ENCODE measurements at regions of chr15 and their contacts with region 1.

Region 1: DNA sequence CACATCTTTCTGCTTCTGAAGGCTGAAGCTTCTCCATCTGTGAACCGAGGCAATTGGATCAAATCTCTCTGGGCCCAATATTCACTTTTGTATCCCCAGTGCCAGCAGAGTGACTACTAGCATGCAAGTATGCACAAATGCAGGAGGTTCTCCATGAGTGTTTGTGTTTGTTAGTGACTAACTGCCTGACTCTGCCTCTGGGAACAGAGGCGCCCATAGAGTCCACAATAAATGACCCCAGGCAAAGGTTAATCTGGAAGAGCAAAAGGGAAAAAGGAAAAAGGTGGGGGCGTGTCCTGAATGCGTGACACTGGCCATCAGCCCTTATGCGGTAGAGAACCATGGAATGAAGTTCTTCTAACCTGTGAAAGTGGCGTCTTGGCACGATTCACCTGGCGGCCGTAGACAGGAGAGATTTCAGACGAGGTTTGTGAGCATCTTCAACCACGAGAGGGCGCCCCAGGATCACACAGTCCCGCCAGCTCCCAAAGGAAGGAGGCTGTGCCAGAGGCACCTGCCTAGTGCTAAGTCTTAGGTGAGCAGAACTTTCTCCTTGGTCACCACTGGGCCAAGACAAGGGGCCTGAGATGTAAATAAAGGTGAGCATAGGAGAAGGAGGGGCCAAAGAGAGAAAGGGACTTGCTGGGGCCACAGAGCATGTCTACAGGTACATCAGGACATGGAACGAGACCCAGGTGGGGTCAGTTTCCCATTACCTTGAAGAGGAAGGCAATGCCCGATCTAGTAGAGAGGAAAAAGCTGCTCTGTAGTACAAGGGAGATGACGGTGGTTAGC is 44.2 kb downstream of the RBPMS2 start:
- DNase-seq: peak; percentile 91
- H3K4me3 Mint-ChIP-seq: no peak overlapping the region
- H3K27ac Mint-ChIP-seq: no peak overlapping the region
- H3K4me1 Mint-ChIP-seq: no peaks in the 10 kb centered on the region
- H3K27me3 Mint-ChIP-seq: peaks cover 1% of the 10 kb centered on the region

Region 2: DNA sequence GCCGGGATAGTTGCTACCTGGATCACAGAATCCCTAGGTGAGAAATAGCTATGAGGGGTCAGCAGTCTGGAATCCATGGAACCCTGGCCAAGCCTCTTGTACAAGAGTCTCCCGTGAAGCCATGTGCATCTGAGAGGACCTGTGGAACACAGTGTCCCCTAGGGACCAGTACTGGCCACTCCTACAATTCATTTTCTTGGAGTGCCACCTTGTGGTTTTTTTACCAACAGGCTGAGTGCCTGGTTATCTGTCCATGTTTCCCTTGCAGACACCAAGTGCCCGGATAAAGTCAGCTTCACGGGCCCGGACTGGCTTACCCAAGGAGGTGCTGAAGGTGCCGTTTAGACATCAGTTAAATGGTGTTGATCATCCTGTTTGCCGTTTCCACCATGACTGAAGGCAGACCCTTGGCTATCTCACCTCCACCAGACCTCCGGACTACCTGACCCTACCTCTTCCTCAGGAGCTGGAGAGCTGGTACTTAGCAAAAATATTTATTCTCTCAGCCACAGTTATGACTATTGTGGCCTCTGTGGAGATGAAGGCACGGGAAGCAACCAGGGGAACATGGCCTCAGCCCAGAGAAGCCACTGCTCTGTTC is 49.7 kb before region 1 on chr15:
- CTCF ChIA-PET with region 1: interaction called, 285 read pairs
- POLR2A ChIA-PET with region 1: no interaction called
- intact Hi-C with region 1: loop called (anchors 1 kb)
- DNase-seq: peak; percentile 20
- H3K4me3 Mint-ChIP-seq: no peak overlapping the region
- H3K27ac Mint-ChIP-seq: no peak overlapping the region
- H3K4me1 Mint-ChIP-seq: peaks cover 2% of the 10 kb centered on the region
- H3K27me3 Mint-ChIP-seq: no peaks in the 10 kb centered on the region

Region 3: DNA sequence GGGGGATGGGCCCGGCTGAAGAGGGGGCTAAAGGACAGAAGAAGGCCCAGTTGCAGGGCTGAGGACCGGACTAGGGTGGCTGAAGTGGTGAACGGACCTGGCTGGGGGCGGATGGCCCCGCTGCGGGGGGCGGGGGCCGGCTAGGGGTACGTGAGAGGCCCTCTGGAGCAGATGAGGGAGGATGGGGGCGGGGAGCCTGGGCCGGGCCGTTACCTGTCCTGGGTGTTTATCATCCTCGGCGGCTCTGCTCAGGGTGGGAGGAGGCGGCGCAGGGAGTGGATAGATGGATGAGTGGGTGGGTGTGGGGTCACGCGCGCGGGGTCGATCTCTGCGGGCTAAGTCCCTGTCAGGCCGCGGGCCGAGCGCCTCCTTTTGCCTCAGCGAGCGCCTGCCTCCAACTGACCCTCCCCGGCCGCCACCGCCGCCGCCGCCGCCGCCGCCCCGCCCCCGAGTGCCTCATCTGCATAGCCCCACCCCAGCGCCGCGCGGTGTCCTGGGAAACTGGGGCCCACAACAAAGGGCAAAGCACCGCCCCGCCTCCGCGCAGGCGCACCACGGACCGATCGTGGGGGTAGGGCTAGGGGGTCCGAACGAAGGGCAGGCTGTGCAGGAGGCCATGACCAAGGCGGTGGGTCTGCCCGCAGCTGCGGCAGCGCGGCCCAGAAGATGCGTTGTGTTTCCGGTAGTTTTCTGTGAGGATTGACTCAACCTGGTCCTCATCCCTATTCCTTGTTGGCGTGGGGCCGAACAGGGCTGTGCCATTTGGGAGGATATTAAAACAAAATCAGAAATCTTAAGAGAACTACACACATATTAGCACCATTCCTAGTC is 28.2 kb before region 1 on chr15:
- CTCF ChIA-PET with region 1: interaction called, 38 read pairs
- POLR2A ChIA-PET with region 1: no interaction called
- intact Hi-C with region 1: no loop called
- DNase-seq: peak; percentile 97
- H3K4me3 Mint-ChIP-seq: peak overlapping the region; percentile 83
- H3K27ac Mint-ChIP-seq: peak overlapping the region; percentile 41
- H3K4me1 Mint-ChIP-seq: peaks cover 51% of the 10 kb centered on the region
- H3K27me3 Mint-ChIP-seq: no peaks in the 10 kb centered on the region

Region 4: GRCh38 chr15:64809649-64810496 is 78.7 kb after region 1 on chr15:
- CTCF ChIA-PET with region 1: interaction called, 168 read pairs
- POLR2A ChIA-PET with region 1: no interaction called
- intact Hi-C with region 1: loop called (anchors 1 kb)
- DNase-seq: peak; percentile 79
- H3K4me3 Mint-ChIP-seq: no peak overlapping the region
- H3K27ac Mint-ChIP-seq: no peak overlapping the region
- H3K4me1 Mint-ChIP-seq: no peaks in the 10 kb centered on the region
- H3K27me3 Mint-ChIP-seq: peaks cover 6% of the 10 kb centered on the region

Region 5: GRCh38 chr15:65028921-65029735 is 297.9 kb after region 1 on chr15 and contains the start of gene MTFMT:
- CTCF ChIA-PET with region 1: no interaction called
- POLR2A ChIA-PET with region 1: no interaction called
- intact Hi-C with region 1: loop called (anchors 5 kb)
- DNase-seq: peak; percentile 94
- H3K4me3 Mint-ChIP-seq: peak within 1 kb of the TSS; percentile 83
- H3K27ac Mint-ChIP-seq: peak within 1 kb of the TSS; percentile 38
- H3K4me1 Mint-ChIP-seq: peaks cover 21% of the 10 kb centered on the region
- H3K27me3 Mint-ChIP-seq: peaks cover 6% of the 10 kb centered on the region
- total RNA-seq, gene MTFMT: 18.2 to 18.3 TPM

Region 6: DNA sequence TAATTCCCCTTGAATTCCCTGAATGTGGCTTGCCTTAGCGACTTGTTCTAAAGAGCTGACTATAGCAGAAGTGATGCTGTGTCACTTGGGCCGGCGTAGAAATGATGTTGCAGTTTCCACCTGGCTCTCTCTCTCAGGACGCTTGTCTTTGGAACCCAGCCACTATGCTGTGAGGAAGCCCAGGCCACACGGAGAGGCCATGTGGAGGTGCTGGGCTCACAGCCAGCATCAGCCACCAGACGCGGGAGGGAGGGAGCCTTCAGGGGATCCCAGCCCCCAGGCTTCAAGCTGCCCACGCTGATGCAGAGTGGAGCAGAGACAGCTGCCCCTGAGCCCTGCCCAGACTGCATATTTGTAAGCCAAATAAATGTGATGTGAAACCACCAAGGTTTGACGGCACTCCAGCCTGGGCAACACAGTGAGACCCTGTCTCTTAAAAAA is 591.9 kb after region 1 on chr15:
- CTCF ChIA-PET with region 1: no interaction called
- POLR2A ChIA-PET with region 1: no interaction called
- intact Hi-C with region 1: no loop called
- DNase-seq: no peak
- H3K4me3 Mint-ChIP-seq: no peak overlapping the region
- H3K27ac Mint-ChIP-seq: no peak overlapping the region
- H3K4me1 Mint-ChIP-seq: no peaks in the 10 kb centered on the region
- H3K27me3 Mint-ChIP-seq: peaks cover 4% of the 10 kb centered on the region